Aorta (tissue), 5 donors: ENCODE measurements at regions of chr7 and their contacts with region 1.

Region 1: GRCh38 chr7:25758559-25758958 is 393.4 kb upstream of the NFE2L3 start:
- DNase-seq: no peak
- ATAC-seq: no peak
- H3K4me3 ChIP-seq: no peak overlapping the region
- H3K27ac ChIP-seq: no peak overlapping the region
- H3K4me1 ChIP-seq: peaks cover 0 to 15% of the 10 kb centered on the region in 2 donors
- H3K27me3 ChIP-seq: no peaks in the 10 kb centered on the region

Region 2: GRCh38 chr7:25586513-25586912 is 172.0 kb before region 1 on chr7:
- intact Hi-C with region 1: no loop called
- DNase-seq: no peak
- ATAC-seq: no peak
- H3K4me3 ChIP-seq: no peak overlapping the region
- H3K27ac ChIP-seq: no peak overlapping the region
- H3K4me1 ChIP-seq: no peaks in the 10 kb centered on the region
- H3K27me3 ChIP-seq: no peaks in the 10 kb centered on the region

Region 3: DNA sequence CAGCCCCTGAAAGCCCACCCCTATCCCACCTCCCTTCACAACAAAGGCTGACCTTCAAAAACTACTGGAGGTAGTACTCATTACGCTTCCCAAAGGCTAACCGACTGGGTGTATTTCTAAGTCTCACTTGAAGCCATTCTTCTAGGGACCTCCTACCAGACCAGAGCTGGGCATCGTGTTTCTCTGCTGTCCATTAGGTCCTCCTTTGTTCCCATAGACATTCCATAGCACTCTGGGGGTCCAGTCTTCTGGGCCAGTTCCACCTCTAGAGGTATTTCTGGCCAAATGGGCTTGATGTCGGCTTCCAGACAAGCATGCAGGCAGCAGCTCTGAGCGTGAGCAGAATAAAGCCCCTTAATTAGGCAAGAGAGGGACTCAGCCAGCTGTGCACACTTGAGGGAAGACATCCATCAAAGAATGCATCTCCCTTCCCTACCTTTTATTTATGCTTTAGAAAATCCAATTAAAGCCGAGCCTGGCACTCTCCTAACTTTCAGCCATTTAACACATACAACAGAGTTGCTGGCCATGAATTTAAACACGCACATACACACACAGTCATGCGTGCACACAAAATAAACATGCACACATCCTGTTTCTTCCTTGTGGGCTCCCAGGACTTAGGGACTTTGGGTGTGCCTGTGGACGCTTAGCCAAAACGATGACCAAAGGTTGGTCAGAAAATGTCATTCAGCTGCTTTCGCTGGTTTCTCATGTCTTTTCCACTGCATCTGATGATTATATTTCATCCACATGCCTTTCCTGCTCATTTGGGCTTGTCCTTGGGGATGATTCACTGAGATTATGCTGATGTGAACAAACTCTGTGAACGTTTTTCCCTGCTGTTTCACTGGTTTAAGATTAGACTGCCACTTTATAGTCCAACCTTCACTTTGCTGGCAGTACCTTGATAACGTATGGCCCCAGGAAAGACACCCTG is 31.4 kb after region 1 on chr7:
- intact Hi-C with region 1: loop called (anchors 5 kb)
- DNase-seq: no peak
- ATAC-seq: no peak
- H3K4me3 ChIP-seq: no peak overlapping the region
- H3K27ac ChIP-seq: peak overlapping the region; percentile 2 to 7
- H3K4me1 ChIP-seq: peaks cover 2 to 7% of the 10 kb centered on the region in 2 donors
- H3K27me3 ChIP-seq: no peaks in the 10 kb centered on the region

Region 4: DNA sequence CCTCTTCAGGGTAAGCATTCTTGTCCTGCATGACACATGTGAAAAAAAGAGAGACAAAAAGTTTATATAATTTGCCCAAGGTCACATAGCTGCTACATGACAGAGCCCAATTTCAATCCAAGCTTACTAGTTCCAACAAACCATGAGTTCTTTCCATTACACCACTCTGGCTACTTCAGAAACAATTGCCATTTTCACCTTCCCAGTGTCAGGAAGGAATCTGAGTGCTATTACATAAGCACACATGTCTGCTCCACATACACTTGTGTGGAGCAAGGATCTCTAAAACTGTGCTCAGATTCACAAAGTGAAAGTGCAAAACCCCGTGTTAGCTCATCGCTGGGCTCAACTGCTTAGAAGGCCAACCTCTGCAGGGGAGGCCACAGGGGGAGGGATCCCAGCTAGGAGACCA is 37.3 kb after region 1 on chr7:
- intact Hi-C with region 1: loop called (anchors 5 kb)
- DNase-seq: no peak
- ATAC-seq: peak; percentile 66
- H3K4me3 ChIP-seq: no peak overlapping the region
- H3K27ac ChIP-seq: peak overlapping the region in 1 of 2 donors; percentile 37
- H3K4me1 ChIP-seq: peaks cover 0 to 2% of the 10 kb centered on the region in 2 donors
- H3K27me3 ChIP-seq: no peaks in the 10 kb centered on the region

Region 5: DNA sequence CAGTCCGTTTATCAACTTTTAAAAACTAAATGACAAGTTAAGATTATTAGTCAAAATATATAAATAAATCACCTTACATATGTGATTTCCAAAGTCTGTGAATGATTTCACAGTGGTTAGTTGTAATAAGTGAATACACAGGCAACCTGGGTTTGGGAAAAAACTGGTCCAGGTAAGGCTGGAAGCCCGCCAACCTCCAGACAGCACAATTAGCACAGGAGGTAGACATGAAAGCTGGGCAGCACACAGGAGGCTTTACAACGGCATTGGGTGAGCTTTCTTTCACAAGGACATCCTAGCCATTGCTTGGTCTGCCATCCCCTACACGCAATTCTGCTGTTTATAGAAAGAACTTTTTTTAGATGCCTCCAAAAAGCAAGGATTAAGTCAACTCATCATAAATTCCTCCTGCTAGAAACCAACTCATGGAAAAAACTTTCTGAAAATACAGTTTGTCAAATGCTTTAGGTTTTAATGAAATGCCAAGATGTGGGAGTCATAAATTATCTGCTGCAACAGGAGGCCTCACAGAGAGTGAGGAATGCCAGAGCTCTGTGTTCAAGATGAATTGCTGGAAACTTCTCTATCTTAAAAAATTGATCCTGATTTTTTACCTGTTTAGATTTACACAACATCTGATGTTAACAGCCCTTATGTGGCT is 46.6 kb after region 1 on chr7:
- intact Hi-C with region 1: loop called in 1 of 2 experiments (anchors 5 kb)
- DNase-seq: no peak
- ATAC-seq: peak; percentile 59
- H3K4me3 ChIP-seq: no peak overlapping the region
- H3K27ac ChIP-seq: peak overlapping the region in 1 of 2 donors; percentile 79
- H3K4me1 ChIP-seq: peaks cover 6 to 7% of the 10 kb centered on the region in 2 donors
- H3K27me3 ChIP-seq: no peaks in the 10 kb centered on the region